ENCODE measurements at regions of chr11 and their contacts with region 1.

Region 1: GRCh38 chr11:82867495-82868082 is 32.6 kb downstream of the PRCP start:
- DNase-seq: peak; percentile 87
- H3K4me3 ChIP-seq: no peak overlapping the region
- H3K27ac ChIP-seq: no peak overlapping the region
- H3K4me1 ChIP-seq: peaks cover 15% of the 10 kb centered on the region
- H3K27me3 ChIP-seq: no peaks in the 10 kb centered on the region
- CTCF ChIP-seq: peak; percentile 43 to 44
- POLR2A ChIP-seq: no peak

Region 2: GRCh38 chr11:82775736-82776346 is 91.7 kb before region 1 on chr11:
- CTCF ChIA-PET with region 1: interaction called, 69 read pairs
- POLR2A ChIA-PET with region 1: no interaction called
- dilution Hi-C with region 1: no loop called
- intact Hi-C with region 1: loop called (anchors 1 kb)
- DNase-seq: peak; percentile 85
- H3K4me3 ChIP-seq: no peak overlapping the region
- H3K27ac ChIP-seq: no peak overlapping the region
- H3K4me1 ChIP-seq: peaks cover 2% of the 10 kb centered on the region
- H3K27me3 ChIP-seq: no peaks in the 10 kb centered on the region
- CTCF ChIP-seq: peak; percentile 86 to 95
- POLR2A ChIP-seq: no peak

Region 3: DNA sequence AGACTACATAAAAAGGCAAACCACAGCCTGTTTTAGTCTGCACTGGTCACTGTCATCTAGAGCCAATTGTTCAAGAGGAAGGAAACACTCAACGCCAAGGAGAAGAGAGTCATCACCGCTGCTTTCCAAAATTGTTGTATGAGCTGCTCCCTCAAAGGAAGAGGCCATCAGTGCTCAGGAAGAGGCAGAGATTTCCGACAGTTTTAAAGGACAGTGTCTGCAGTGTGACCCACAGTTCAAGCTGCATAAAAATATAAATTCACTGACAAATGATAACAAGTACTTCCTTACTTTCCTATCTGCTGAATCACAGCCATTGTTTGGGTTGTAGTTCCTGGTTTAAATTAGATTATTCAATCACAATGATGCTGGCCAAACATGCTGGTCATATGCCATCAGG is 16.3 kb after region 1 on chr11:
- CTCF ChIA-PET with region 1: interaction called, 42 read pairs
- POLR2A ChIA-PET with region 1: no interaction called
- dilution Hi-C with region 1: no loop called
- intact Hi-C with region 1: no loop called
- DNase-seq: peak; percentile 94
- H3K4me3 ChIP-seq: no peak overlapping the region
- H3K27ac ChIP-seq: peak overlapping the region; percentile 68
- H3K4me1 ChIP-seq: peaks cover 38% of the 10 kb centered on the region
- H3K27me3 ChIP-seq: no peaks in the 10 kb centered on the region
- CTCF ChIP-seq: no peak
- POLR2A ChIP-seq: peak; percentile 66

Region 4: GRCh38 chr11:82906244-82906654 is 38.7 kb after region 1 on chr11:
- CTCF ChIA-PET with region 1: interaction called, 191 read pairs
- POLR2A ChIA-PET with region 1: interaction called, 8 read pairs
- dilution Hi-C with region 1: no loop called
- intact Hi-C with region 1: no loop called
- DNase-seq: peak; percentile 68
- H3K4me3 ChIP-seq: no peak overlapping the region
- H3K27ac ChIP-seq: no peak overlapping the region
- H3K4me1 ChIP-seq: peaks cover 20% of the 10 kb centered on the region
- H3K27me3 ChIP-seq: no peaks in the 10 kb centered on the region
- CTCF ChIP-seq: peak; percentile 12 to 25
- POLR2A ChIP-seq: no peak

Region 5: DNA sequence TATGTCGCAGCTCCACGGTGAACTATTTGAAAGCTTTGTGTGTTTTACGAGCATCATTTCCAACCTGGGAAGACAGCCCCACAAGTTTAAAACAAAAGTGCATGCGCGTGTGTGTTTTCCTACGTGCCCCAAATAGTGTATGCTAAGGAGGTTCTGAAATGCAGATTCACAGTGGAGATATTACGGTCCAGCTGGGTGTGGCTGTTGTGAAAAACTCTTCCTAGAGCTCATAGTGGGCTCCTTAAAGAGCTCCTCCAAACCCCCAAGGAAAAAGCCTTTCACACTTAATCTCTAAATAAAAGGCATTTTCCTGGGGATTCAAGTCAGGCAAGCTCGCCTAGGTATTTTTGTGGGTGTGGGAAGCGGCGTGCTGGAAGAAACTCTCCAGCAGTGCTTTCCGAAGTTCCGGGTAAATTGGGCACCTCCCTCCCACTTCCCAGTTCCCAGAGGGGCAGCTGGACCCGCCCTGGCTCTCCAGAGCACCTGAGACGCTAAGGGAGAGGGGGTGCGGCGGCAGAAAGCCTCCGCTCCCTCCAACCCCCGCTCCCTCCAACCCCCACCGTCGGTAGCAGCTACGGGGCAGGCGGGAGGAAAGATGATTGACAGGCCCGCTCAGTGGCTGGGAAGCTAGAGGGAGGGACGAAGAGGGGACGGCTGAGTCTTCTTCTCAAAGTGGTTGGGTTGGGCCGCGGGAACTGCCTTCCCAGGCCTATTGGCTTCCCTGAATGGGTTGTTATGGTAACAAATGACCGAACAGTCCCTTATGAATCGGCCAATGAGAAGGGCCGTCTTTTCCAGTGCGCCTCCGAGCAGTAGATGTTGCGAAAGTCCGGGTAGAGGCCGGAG is 288.8 kb after region 1 on chr11:
- CTCF ChIA-PET with region 1: interaction called, 8 read pairs
- POLR2A ChIA-PET with region 1: no interaction called
- dilution Hi-C with region 1: no loop called
- intact Hi-C with region 1: loop called (anchors 2 kb)
- DNase-seq: peak; percentile 100
- H3K4me3 ChIP-seq: peak overlapping the region; percentile 76 to 93 (median 83)
- H3K27ac ChIP-seq: peak overlapping the region; percentile 57
- H3K4me1 ChIP-seq: peaks cover 23% of the 10 kb centered on the region
- H3K27me3 ChIP-seq: no peaks in the 10 kb centered on the region
- CTCF ChIP-seq: no peak
- POLR2A ChIP-seq: no peak

Region 6: GRCh38 chr11:83724008-83724461 is 856.4 kb after region 1 on chr11:
- CTCF ChIA-PET with region 1: interaction called, 11 read pairs
- POLR2A ChIA-PET with region 1: no interaction called
- dilution Hi-C with region 1: no loop called
- intact Hi-C with region 1: no loop called
- DNase-seq: peak; percentile 65
- H3K4me3 ChIP-seq: peak overlapping the region in 2 of 3 experiments; percentile 23 to 34
- H3K27ac ChIP-seq: no peak overlapping the region
- H3K4me1 ChIP-seq: no peaks in the 10 kb centered on the region
- H3K27me3 ChIP-seq: peaks cover 12 to 17% of the 10 kb centered on the region in 2 experiments
- CTCF ChIP-seq: no peak
- POLR2A ChIP-seq: no peak